ENCODE measurements at regions of chr9 and their contacts with region 1.

Region 1: DNA sequence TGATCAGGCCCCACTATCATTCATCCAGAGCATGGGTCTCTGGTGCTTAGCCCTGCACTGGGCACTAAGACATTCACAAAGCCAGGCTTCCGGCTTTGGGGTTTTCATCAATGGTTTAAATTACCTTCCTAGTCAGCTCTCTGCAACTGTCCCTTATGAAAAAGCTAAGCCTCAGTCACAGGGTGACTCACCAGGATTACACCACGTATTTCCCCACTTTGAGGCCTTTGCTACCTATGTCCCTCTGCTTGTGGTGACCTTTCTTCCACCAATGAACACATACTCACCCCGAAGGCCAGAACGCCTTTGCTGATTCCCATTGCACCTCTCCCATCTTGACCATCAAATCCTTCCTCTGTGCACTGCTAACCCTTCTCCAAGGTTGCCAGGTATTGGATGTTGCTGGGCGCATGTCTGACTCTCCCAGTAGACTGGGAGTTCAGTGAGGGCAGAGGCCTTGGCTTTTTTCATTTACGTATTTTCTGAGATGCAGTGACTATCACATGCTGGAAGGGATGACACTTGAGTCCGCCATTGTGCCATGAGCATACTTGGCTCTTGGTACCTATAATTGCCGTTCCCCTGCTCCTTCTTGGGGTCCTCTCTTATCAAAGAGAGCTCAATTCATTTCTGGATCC is 58.7 kb upstream of the TNFSF8 start:
- DNase-seq: peak; percentile 12
- H3K4me3 Mint-ChIP-seq: peak overlapping the region; percentile 24
- H3K27ac Mint-ChIP-seq: peak overlapping the region; percentile 93
- H3K4me1 Mint-ChIP-seq: peaks cover 46% of the 10 kb centered on the region
- H3K27me3 Mint-ChIP-seq: no peaks in the 10 kb centered on the region

Region 2: DNA sequence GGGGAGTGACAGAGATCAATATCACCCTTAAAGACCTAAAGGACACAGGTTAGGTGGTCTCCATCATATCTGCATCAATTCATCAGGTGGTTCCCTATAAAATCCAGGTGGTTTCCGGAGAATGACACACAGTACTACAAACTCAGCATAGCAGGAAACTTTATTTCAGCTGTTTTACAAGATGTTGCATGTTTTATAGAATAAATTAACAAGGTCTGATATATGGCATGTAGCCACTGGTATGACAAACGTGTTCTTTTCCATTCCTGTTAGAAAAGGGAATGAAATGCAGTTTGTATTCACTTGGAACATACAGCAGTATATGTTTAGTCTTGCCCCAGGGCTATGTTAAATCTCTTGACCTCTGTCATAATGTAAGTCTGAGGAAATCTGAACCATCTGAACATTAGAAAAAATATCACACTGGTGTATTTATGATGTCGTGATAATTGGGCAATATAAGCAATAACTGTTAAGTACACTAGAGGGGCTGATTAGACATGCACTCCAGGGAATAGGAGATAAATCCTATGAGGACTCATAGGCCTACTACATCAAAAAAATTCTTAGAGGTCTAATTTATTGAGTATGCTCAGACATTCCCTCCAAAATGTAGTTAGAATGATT is 16.5 kb before region 1 on chr9:
- CTCF ChIA-PET with region 1: interaction called, 10 read pairs
- POLR2A ChIA-PET with region 1: no interaction called
- DNase-seq: no peak
- H3K4me3 Mint-ChIP-seq: no peak overlapping the region
- H3K27ac Mint-ChIP-seq: no peak overlapping the region
- H3K4me1 Mint-ChIP-seq: peaks cover 22% of the 10 kb centered on the region
- H3K27me3 Mint-ChIP-seq: no peaks in the 10 kb centered on the region

Region 3: GRCh38 chr9:115042781-115043509 is 53.9 kb after region 1 on chr9:
- CTCF ChIA-PET with region 1: no interaction called
- POLR2A ChIA-PET with region 1: no interaction called
- DNase-seq: no peak
- H3K4me3 Mint-ChIP-seq: no peak overlapping the region
- H3K27ac Mint-ChIP-seq: no peak overlapping the region
- H3K4me1 Mint-ChIP-seq: peaks cover 2% of the 10 kb centered on the region
- H3K27me3 Mint-ChIP-seq: peaks cover 9% of the 10 kb centered on the region